ENCODE measurements at regions of chr13 and their contacts with region 1.

Region 1: GRCh38 chr13:75482070-75482819 is at the start of gene TBC1D4:
- DNase-seq: peak; percentile 87 to 95 (median 95)
- ATAC-seq: peak; percentile 89 to 90
- H3K4me3 ChIP-seq: peak within 1 kb of the TSS; percentile 88
- H3K27ac ChIP-seq: peak within 1 kb of the TSS; percentile 89
- H3K4me1 ChIP-seq: peaks cover 3% of the 10 kb centered on the region
- H3K27me3 ChIP-seq: no peaks in the 10 kb centered on the region
- total RNA-seq, gene TBC1D4: 51.2 to 69.4 (median 63.6) TPM

Region 2: GRCh38 chr13:75372517-75372916 is 109.7 kb before region 1 on chr13:
- intact Hi-C with region 1: loop called (anchors 5 kb)
- DNase-seq: no peak
- ATAC-seq: peak; percentile 45 to 55
- H3K4me3 ChIP-seq: no peak overlapping the region
- H3K27ac ChIP-seq: no peak overlapping the region
- H3K4me1 ChIP-seq: peaks cover 7% of the 10 kb centered on the region
- H3K27me3 ChIP-seq: no peaks in the 10 kb centered on the region

Region 3: DNA sequence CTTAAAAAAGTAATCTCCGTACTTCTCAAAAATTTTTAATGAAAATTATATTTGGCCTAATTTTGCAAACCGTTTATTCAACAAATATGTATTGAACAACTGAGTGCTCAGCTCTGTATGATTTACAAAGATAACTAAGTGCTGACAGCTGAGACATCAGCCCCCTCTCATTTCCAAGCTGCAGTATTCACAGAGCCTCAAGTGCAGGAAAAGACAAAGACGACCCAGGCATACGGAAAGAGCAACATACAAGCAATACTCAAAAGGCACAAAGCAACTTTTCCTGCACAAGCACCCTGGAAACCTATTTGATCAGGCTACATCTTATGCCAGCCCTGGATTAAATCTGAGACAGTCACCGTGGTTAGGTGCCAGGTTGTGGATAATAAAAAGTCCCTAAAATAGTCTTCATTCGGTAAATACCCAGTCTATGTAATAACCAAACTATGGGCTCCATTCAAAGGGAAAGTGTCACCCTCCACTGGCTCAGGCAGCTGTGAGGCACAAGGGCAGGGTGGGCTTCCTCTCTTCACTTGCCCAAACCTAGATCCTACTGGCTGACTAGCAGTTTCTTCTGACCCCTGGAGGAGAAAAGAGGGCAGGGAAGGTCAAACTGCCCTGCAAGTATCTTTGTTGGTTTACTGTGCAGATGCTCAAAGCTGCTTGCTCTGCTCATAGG is 65.8 kb before region 1 on chr13:
- intact Hi-C with region 1: loop called in 1 of 4 experiments (anchors 10 kb)
- DNase-seq: no peak
- ATAC-seq: peak in 1 of 2 donors; percentile 5
- H3K4me3 ChIP-seq: no peak overlapping the region
- H3K27ac ChIP-seq: peak overlapping the region; percentile 89
- H3K4me1 ChIP-seq: peaks cover 15% of the 10 kb centered on the region
- H3K27me3 ChIP-seq: no peaks in the 10 kb centered on the region

Region 4: DNA sequence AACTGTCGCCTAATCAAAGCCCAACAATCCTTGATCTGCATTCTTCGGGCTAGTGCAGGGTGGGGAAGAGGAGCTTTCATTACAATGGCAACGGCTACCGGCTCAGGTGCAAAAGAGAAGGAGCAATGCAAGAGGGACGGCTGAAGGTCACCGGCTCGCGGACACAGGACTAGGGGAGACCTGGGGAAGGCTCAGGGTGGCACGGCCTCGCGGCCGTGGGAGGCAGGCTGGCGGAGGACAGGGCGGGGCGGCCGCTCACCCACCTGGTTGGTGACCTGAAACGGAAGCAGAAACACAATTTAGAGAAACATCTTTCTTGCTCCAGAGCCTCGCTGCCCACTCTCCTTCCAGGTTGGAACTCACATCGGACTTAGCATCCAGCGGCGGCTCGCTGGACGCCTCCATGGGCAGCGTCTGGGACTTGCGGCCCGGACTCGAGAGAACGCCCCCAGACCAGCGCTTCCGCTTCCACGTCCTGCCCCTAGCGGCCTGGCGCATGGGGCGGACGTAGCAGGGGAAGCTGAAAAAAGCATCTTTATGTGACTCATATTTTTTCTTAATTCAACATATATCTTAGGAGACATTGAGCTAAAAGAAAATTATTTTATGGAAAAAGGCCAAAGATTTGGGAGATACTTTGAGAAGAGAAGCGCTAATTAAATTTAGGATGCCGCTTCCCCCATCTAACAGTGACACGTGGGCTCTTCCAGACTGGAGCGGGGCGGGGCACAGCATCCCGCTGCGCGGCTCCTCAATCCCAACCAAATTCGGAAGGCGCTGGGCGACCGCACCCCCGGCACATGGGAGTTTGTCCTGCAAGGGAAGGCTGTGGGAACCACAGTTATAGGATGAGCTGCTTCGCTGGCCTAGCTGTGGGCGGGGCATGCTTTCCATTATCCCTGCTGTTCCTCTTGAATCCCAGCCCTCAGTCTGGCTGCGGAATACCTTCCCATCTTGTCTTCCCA is 55.4 kb after region 1 on chr13 and contains the start of gene COMMD6:
- intact Hi-C with region 1: loop called in 1 of 4 experiments (anchors 10 kb)
- DNase-seq: peak; percentile 86 to 92 (median 90)
- ATAC-seq: peak; percentile 97 to 99
- H3K4me3 ChIP-seq: peak within 1 kb of the TSS; percentile 88
- H3K27ac ChIP-seq: peak within 1 kb of the TSS; percentile 1
- H3K4me1 ChIP-seq: no peaks in the 10 kb centered on the region
- H3K27me3 ChIP-seq: no peaks in the 10 kb centered on the region
- total RNA-seq, gene COMMD6: 128 to 157 (median 138) TPM

Region 5: GRCh38 chr13:75549262-75550158 is 67.3 kb after region 1 on chr13 and contains the start of gene UCHL3:
- intact Hi-C with region 1: no loop called
- DNase-seq: peak; percentile 97 to 99 (median 99)
- ATAC-seq: peak; percentile 98 to 99
- H3K4me3 ChIP-seq: peak within 1 kb of the TSS; percentile 70
- H3K27ac ChIP-seq: peak within 1 kb of the TSS; percentile 49
- H3K4me1 ChIP-seq: no peaks in the 10 kb centered on the region
- H3K27me3 ChIP-seq: no peaks in the 10 kb centered on the region
- total RNA-seq, gene UCHL3: 16.2 to 25.4 (median 16.6) TPM

Measured in right cardiac atrium (tissue), 5 donors.